ENCODE measurements at regions of chr19 and their contacts with region 1.

Region 1: DNA sequence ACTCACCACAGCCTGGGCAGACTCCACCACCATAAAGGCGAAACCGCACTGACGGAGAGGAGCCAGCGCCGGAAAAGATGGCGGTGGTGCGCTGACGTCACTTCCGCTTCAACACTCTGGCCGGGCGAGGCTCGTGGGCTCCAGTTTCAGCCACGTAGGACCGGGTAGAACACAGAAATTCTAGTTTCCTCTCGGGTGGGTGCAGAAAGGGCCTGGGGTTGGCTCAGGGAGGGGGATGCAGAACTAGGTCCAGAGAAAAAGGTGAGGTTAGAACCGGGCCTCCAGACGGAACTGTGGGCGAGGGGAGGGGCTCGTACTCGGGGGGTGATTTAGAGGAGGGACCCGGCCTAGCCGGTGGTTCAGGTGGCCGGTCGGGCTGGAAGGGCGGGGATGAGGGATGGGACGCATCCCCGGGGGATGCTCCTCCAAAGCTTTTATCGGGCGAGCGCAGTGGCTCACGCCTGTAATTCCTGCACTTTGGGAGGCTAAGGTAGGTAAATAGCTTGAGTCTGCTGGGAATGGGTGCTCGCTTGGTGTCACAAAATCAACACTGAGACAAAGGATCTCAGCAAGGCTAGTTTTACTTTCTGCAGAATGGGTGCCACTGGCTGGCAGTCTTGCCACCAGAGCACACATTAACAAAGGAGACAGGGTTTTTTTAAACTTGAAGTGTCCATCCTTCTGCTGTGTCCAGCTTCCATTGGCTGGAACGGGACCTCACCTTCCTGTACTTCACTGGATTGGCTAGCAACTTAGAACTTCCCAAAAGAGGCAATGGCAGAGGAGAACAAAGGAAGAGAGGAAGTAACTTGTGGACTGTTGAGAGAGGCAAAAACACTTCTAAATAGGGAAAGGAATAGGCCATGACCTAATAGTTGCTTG is at the start of gene ZNF561:
- DNase-seq: peak; percentile 89
- ATAC-seq: peak; percentile 85
- H3K4me3 ChIP-seq: peak within 1 kb of the TSS; percentile 68
- H3K27ac ChIP-seq: peak within 1 kb of the TSS; percentile 99
- H3K4me1 ChIP-seq: peaks cover 4% of the 10 kb centered on the region; the same call in 1 of the 2 replicates
- H3K27me3 ChIP-seq: no peaks in the 10 kb centered on the region
- CTCF ChIP-seq: no peak
- POLR2A ChIP-seq: peak; percentile 80
- RAD21 ChIP-seq: no peak
- total RNA-seq, gene ZNF561: 38.9 TPM in 2 replicates

Region 2: GRCh38 chr19:9205501-9206113 is 415.8 kb before region 1 on chr19:
- CTCF ChIA-PET with region 1: no interaction called
- POLR2A ChIA-PET with region 1: no interaction called
- dilution Hi-C with region 1: no loop called
- in situ Hi-C with region 1: no loop called
- intact Hi-C with region 1: loop called (anchors 2 kb)
- DNase-seq: peak; percentile 54
- ATAC-seq: peak; percentile 97
- H3K4me3 ChIP-seq: peak overlapping the region; percentile 17
- H3K27ac ChIP-seq: no peak overlapping the region
- H3K4me1 ChIP-seq: no peaks in the 10 kb centered on the region
- H3K27me3 ChIP-seq: no peaks in the 10 kb centered on the region
- CTCF ChIP-seq: peak; percentile 72
- POLR2A ChIP-seq: no peak
- RAD21 ChIP-seq: peak; percentile 79

Region 3: GRCh38 chr19:9474975-9475374 is 146.4 kb before region 1 on chr19:
- CTCF ChIA-PET with region 1: no interaction called
- POLR2A ChIA-PET with region 1: no interaction called
- dilution Hi-C with region 1: no loop called
- in situ Hi-C with region 1: no loop called
- intact Hi-C with region 1: no loop called
- DNase-seq: no peak
- ATAC-seq: no peak
- H3K4me3 ChIP-seq: no peak overlapping the region
- H3K27ac ChIP-seq: no peak overlapping the region
- H3K4me1 ChIP-seq: no peaks in the 10 kb centered on the region
- H3K27me3 ChIP-seq: no peaks in the 10 kb centered on the region
- CTCF ChIP-seq: no peak
- POLR2A ChIP-seq: no peak
- RAD21 ChIP-seq: no peak

Region 4: GRCh38 chr19:9597027-9597426 is 24.4 kb before region 1 on chr19:
- CTCF ChIA-PET with region 1: no interaction called
- POLR2A ChIA-PET with region 1: no interaction called
- dilution Hi-C with region 1: no loop called
- in situ Hi-C with region 1: no loop called
- intact Hi-C with region 1: no loop called
- DNase-seq: peak; percentile 92
- ATAC-seq: peak; percentile 84
- H3K4me3 ChIP-seq: no peak overlapping the region
- H3K27ac ChIP-seq: no peak overlapping the region; the same call in 1 of the 2 replicates
- H3K4me1 ChIP-seq: peaks cover 4% of the 10 kb centered on the region; the same call in 1 of the 2 replicates
- H3K27me3 ChIP-seq: no peaks in the 10 kb centered on the region
- CTCF ChIP-seq: no peak
- POLR2A ChIP-seq: no peak
- RAD21 ChIP-seq: no peak

Region 5: GRCh38 chr19:9768175-9769112 is 147.0 kb after region 1 on chr19 and contains the start of gene ZNF846:
- CTCF ChIA-PET with region 1: interaction called, 3 read pairs
- POLR2A ChIA-PET with region 1: no interaction called
- dilution Hi-C with region 1: no loop called
- in situ Hi-C with region 1: no loop called
- intact Hi-C with region 1: loop called (anchors 1 kb)
- DNase-seq: peak; percentile 96
- ATAC-seq: peak; percentile 98
- H3K4me3 ChIP-seq: peak within 1 kb of the TSS; percentile 83
- H3K27ac ChIP-seq: peak within 1 kb of the TSS; percentile 94
- H3K4me1 ChIP-seq: no peaks in the 10 kb centered on the region
- H3K27me3 ChIP-seq: no peaks in the 10 kb centered on the region
- CTCF ChIP-seq: no peak
- POLR2A ChIP-seq: peak; percentile 19; the same call in 1 of the 2 replicates
- RAD21 ChIP-seq: no peak
- total RNA-seq, gene ZNF846: 5.3 and 6.5 TPM in 2 replicates

Region 6: DNA sequence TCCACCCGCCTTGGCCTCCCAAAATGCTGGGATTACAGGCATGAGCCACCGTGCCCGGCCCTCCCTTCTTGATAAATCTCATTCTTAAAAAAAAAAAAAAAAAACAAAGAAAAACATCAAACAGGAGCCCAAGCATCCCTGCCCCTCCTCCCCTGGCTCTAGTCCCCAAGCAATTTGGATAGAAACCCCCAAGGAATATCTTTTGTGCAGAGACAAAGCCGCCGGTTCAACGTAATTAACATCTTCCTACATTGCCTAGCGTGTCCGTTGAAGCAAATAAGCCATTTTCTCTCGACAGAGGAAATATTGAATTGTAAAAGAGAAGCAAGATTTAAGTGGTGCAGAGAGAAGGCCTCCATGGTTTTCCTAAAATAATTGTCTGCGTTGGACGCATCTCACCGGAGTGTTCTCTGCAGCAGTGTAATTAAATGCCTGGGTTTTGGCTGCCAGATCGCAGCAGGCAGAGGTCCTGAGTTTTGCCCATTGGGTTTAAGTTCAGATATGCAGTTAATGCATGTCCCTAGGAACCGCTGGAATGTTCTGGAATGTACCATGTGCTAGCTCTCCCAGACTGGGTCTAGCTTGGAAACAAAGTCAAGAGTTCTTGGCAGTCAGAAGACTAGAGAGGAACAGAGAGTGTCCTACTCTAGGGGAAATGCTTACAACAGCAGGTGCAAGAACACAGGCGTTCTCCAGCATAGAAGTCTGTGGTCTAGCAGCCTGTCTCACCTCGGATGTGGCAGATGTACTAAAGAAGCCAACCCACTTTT is 244.5 kb after region 1 on chr19:
- CTCF ChIA-PET with region 1: no interaction called
- POLR2A ChIA-PET with region 1: no interaction called
- dilution Hi-C with region 1: no loop called
- in situ Hi-C with region 1: no loop called
- intact Hi-C with region 1: no loop called
- DNase-seq: no peak
- ATAC-seq: no peak
- H3K4me3 ChIP-seq: no peak overlapping the region
- H3K27ac ChIP-seq: no peak overlapping the region
- H3K4me1 ChIP-seq: no peaks in the 10 kb centered on the region
- H3K27me3 ChIP-seq: no peaks in the 10 kb centered on the region; the same call in 1 of the 2 replicates
- CTCF ChIP-seq: no peak
- POLR2A ChIP-seq: no peak
- RAD21 ChIP-seq: no peak

Region 7: DNA sequence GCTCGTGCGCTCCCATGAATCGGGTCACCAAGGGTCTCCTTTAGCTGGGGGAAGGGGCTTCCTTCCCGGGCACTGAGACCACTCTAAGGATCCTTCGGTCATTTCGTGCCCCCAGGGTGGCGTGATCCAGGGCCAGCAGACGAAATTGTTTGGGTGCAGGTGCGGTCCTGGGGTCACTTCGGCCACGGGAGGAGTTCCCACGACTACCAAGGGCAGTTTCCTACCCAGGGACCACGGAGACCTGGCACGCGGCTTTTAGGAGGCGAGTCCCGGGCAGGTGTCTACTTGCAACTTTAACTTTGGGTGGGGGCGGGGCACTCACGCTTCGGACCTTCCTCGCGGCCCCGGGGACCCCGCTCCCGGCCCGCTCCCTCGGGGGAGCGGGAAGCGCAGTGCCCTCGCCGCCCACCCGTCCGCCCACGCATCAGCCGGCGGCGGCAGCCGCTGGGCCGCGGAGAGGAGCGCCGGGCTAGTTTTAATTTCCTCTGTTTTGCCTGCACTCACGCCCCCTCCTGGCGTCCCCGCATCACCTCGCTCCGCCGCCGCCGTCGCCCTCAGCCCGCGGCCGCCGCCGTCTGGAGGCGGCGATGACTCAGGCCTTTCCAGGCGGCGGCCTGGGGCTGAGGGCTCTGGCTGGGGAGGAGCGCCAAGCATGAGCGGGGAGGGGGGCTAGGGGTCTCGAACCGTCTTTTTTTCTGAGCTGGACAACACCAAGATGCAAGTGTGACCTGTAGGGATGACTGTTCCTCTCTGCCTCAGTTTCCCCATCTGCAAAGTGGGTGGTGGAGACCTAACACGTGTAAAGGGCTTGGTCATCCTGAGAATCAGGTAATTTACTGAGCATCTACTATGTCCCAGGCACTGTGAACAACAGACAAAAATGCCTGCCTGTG is 293.2 kb after region 1 on chr19:
- CTCF ChIA-PET with region 1: interaction called, 3 read pairs
- POLR2A ChIA-PET with region 1: no interaction called
- dilution Hi-C with region 1: no loop called
- in situ Hi-C with region 1: no loop called
- intact Hi-C with region 1: loop called (anchors 10 kb)
- DNase-seq: peak; percentile 77
- ATAC-seq: peak; percentile 84
- H3K4me3 ChIP-seq: peak overlapping the region; percentile 52
- H3K27ac ChIP-seq: no peak overlapping the region
- H3K4me1 ChIP-seq: peaks cover 2% of the 10 kb centered on the region; the same call in 1 of the 2 replicates
- H3K27me3 ChIP-seq: peaks cover 16% of the 10 kb centered on the region
- CTCF ChIP-seq: peak; percentile 66
- POLR2A ChIP-seq: no peak
- RAD21 ChIP-seq: peak; percentile 53